Motor neuron (in vitro differentiated cells): ENCODE measurements at regions of chr9 and their contacts with region 1.

Region 1: DNA sequence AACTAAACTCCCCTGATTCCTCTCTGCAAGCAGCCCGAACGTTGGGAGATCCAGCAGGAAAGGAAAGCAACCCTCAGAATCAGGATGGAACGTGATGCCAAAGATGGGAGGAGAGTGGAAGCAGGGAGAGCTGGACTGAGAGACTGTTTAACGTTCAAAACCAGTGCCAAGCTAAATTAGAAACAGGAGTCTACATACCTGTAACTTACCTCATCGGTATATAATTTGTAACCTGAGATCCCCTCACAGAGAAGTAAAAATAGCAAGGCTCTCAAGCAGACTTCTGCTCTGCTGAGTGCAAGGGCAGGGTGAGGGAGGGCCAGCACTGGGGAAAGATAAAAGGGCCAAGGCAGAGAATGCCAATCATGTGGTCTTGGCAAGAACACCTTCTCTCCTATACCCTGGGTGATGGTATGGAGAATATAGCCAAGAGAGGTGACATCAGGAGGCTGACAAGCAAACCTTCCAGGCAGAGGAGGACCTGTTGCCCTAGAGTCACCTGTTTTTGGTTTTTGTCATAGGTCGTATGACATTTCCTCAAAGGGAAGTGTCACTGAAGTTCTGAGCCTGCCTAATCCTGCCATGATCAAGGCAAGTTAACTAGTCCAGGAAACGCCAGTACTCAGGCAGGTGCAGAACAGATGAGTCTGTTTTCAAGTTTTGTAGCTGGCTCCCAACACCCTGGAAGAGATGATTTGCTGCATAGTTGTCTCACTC is 472.0 kb downstream of the NFIB start:
- ATAC-seq: no peak
- H3K4me3 ChIP-seq: no peak overlapping the region
- H3K27ac ChIP-seq: no peak overlapping the region
- H3K4me1 ChIP-seq: no peaks in the 10 kb centered on the region

Region 2: DNA sequence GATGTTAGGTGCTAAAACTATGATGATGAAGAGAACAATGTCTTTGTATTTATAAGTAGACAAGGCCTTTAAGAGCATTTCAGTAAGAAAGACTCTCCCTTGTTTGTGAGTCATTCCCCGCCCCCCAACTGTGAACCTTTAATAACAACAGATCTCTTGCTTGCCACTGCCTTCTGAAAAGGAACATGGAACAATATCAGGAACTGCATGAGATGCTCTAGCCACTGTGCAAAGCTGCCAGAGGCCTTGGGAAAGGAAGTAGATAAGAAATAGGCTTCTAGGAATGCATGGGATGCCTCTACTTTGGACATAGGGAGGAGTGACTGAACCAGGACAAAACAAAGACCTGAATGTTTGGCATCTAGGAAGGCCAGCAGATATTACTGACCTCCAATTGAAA is 266.3 kb before region 1 on chr9:
- in situ Hi-C with region 1: no loop called
- ATAC-seq: no peak
- H3K4me3 ChIP-seq: no peak overlapping the region
- H3K27ac ChIP-seq: no peak overlapping the region
- H3K4me1 ChIP-seq: peaks cover 0 to 5% of the 10 kb centered on the region in 2 donors

Region 3: GRCh38 chr9:13942695-13943094 is 100.8 kb after region 1 on chr9:
- in situ Hi-C with region 1: loop called in 1 of 9 experiments (anchors 25 kb)
- ATAC-seq: peak in 4 of 8 experiments; percentile 48 to 96 (median 64)
- H3K4me3 ChIP-seq: no peak overlapping the region
- H3K27ac ChIP-seq: no peak overlapping the region
- H3K4me1 ChIP-seq: peaks cover 0 to 3% of the 10 kb centered on the region in 2 donors

Region 4: GRCh38 chr9:13956107-13956506 is 114.2 kb after region 1 on chr9:
- in situ Hi-C with region 1: no loop called
- ATAC-seq: peak in 1 of 8 experiments; percentile 10
- H3K4me3 ChIP-seq: no peak overlapping the region
- H3K27ac ChIP-seq: no peak overlapping the region
- H3K4me1 ChIP-seq: peaks cover 6 to 11% of the 10 kb centered on the region in 2 donors

Region 5: GRCh38 chr9:14296495-14297113 is 454.7 kb after region 1 on chr9:
- in situ Hi-C with region 1: no loop called
- ATAC-seq: peak in 3 of 8 experiments; percentile 20 to 68 (median 60)
- H3K4me3 ChIP-seq: no peak overlapping the region
- H3K27ac ChIP-seq: no peak overlapping the region
- H3K4me1 ChIP-seq: peaks cover 7 to 8% of the 10 kb centered on the region in 2 donors